PC-3 (cell line): ENCODE measurements at regions of chr11 and their contacts with region 1.

Region 1: DNA sequence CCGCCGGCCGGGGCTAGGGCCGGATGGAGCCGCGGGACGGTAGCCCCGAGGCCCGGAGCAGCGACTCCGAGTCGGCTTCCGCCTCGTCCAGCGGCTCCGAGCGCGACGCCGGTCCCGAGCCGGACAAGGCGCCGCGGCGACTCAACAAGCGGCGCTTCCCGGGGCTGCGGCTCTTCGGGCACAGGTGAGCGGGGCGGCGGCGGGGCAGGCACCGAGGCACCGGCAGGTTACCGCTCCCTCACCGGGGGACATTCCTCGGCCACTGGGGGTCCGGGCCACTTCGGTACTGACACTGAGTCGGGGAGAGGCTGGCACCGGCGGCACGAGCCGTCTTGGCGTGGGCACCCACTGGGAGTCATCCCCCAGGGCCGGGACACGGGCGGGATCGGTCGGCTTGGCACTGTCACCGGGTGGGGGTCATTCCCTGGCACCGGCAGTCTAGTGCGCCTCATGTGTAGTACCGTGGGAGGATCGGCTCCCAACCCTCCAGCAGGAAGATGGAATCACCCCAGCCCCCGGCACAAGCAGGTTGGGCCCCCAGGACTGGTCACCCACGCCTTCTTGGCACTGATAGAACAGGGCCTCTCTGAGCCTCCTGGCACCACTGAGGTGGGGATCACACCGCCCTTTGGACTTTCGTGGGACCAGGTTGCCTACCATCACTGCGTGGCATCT is 511 bp downstream of the DGKZ start:
- DNase-seq: no peak
- ATAC-seq: peak; percentile 30
- H3K4me3 ChIP-seq: peak overlapping the region; percentile 81
- H3K27ac ChIP-seq: no peak overlapping the region
- H3K4me1 ChIP-seq: peaks cover 12% of the 10 kb centered on the region
- H3K27me3 ChIP-seq: no peaks in the 10 kb centered on the region
- CTCF ChIP-seq: no peak

Region 2: GRCh38 chr11:46361283-46362155 is 13.7 kb after region 1 on chr11:
- CTCF ChIA-PET with region 1: no interaction called
- POLR2A ChIA-PET with region 1: interaction called, 3 read pairs
- intact Hi-C with region 1: loop called (anchors 2 kb)
- DNase-seq: no peak
- ATAC-seq: no peak
- H3K4me3 ChIP-seq: no peak overlapping the region
- H3K27ac ChIP-seq: no peak overlapping the region
- H3K4me1 ChIP-seq: peaks cover 26% of the 10 kb centered on the region
- H3K27me3 ChIP-seq: no peaks in the 10 kb centered on the region
- CTCF ChIP-seq: no peak